ENCODE measurements at regions of chr16 and their contacts with region 1.

Region 1: GRCh38 chr16:67770346-67770991 is 35.9 kb downstream of the RANBP10 start:
- DNase-seq: no peak
- H3K4me3 ChIP-seq: no peak overlapping the region
- H3K27ac ChIP-seq: no peak overlapping the region
- H3K4me1 ChIP-seq: peaks cover 6% of the 10 kb centered on the region
- H3K27me3 ChIP-seq: no peaks in the 10 kb centered on the region
- CTCF ChIP-seq: no peak

Region 2: GRCh38 chr16:67613808-67614207 is 156.7 kb before region 1 on chr16:
- CTCF ChIA-PET with region 1: no interaction called
- POLR2A ChIA-PET with region 1: no interaction called
- intact Hi-C with region 1: no loop called
- DNase-seq: peak; percentile 17
- H3K4me3 ChIP-seq: no peak overlapping the region
- H3K27ac ChIP-seq: no peak overlapping the region
- H3K4me1 ChIP-seq: no peaks in the 10 kb centered on the region
- H3K27me3 ChIP-seq: no peaks in the 10 kb centered on the region
- CTCF ChIP-seq: peak; percentile 46

Region 3: GRCh38 chr16:67841764-67842508 is 71.5 kb after region 1 on chr16 and contains the start of gene THAP11:
- CTCF ChIA-PET with region 1: no interaction called
- POLR2A ChIA-PET with region 1: no interaction called
- intact Hi-C with region 1: no loop called
- DNase-seq: peak; percentile 98
- H3K4me3 ChIP-seq: peak within 1 kb of the TSS; percentile 89
- H3K27ac ChIP-seq: peak within 1 kb of the TSS; percentile 99
- H3K4me1 ChIP-seq: peaks cover 29% of the 10 kb centered on the region
- H3K27me3 ChIP-seq: no peaks in the 10 kb centered on the region
- CTCF ChIP-seq: peak; percentile 85
- total RNA-seq, gene THAP11: 46.6 and 48.9 TPM in 2 replicates

Region 4: GRCh38 chr16:67942200-67942509 is 171.7 kb after region 1 on chr16:
- CTCF ChIA-PET with region 1: interaction called, 12 read pairs
- POLR2A ChIA-PET with region 1: no interaction called
- intact Hi-C with region 1: no loop called
- DNase-seq: peak; percentile 37
- H3K4me3 ChIP-seq: no peak overlapping the region
- H3K27ac ChIP-seq: no peak overlapping the region
- H3K4me1 ChIP-seq: peaks cover 4% of the 10 kb centered on the region
- H3K27me3 ChIP-seq: no peaks in the 10 kb centered on the region
- CTCF ChIP-seq: peak; percentile 84

Region 5: DNA sequence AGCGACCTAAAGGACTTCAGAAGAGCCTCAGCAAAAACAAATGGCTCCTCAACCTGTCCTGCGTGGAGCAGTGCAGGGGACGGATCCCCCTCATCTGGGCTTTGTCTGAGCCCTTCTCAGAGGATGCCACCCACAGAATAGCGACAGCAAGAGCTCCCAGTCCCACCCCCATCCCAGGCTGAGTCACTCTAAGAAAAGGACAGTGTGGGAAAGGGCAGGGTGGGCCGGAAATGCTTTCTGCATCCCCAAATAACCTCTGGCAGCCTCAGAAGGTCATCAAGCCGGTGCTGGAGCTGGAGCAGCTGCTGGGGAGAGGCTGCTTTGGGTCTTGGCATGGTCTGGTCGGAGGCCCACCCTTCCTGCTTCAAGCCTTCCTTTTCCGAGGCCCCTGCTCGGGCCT is 189.1 kb after region 1 on chr16:
- CTCF ChIA-PET with region 1: no interaction called
- POLR2A ChIA-PET with region 1: no interaction called
- intact Hi-C with region 1: no loop called
- DNase-seq: no peak
- H3K4me3 ChIP-seq: no peak overlapping the region
- H3K27ac ChIP-seq: peak overlapping the region; percentile 16
- H3K4me1 ChIP-seq: no peaks in the 10 kb centered on the region
- H3K27me3 ChIP-seq: no peaks in the 10 kb centered on the region
- CTCF ChIP-seq: no peak

Region 6: GRCh38 chr16:68085259-68086071 is 315.0 kb after region 1 on chr16 and contains the start of gene NFATC3:
- CTCF ChIA-PET with region 1: no interaction called
- POLR2A ChIA-PET with region 1: no interaction called
- intact Hi-C with region 1: no loop called
- DNase-seq: peak; percentile 98
- H3K4me3 ChIP-seq: peak within 1 kb of the TSS; percentile 88
- H3K27ac ChIP-seq: peak within 1 kb of the TSS; percentile 91
- H3K4me1 ChIP-seq: peaks cover 17% of the 10 kb centered on the region
- H3K27me3 ChIP-seq: no peaks in the 10 kb centered on the region
- CTCF ChIP-seq: no peak
- total RNA-seq, gene NFATC3: 53.7 and 56.0 TPM in 2 replicates

Measured in A673 (cell line).